ENCODE measurements at regions of chrX and their contacts with region 1.

Region 1: DNA sequence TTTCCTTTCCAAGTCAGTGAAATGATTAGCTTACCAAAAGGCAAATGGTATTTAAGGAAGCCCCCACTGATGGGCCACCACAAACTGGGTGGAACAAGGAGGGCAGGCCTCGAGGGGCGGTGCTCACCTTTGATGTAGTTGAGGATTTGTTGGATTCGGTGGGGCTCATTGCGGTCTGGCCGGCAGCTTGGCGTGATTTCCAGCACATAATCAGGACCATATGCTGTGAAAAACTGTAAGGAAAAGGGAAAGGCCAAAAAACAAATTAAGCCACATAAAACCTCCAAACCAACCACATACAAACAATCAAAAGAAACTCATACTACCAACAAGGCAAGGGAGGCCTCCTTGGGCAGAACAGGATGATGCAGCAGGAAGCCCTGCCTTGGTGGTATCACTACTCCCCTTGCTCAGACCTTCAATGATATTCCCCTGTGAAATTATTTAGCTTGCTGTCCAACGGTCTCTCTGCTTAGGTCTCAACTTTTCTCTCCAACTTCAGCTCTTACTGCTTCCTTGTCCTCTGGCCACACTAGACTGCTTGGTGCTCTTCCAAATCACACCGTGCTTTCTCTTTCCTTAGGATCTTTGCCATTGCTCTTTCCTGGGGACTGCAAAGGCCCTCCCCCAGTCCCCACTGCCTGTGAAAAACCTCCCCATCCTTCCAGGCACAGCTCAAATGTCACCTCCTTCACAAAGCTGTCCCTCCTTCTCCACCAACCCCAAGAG is 46.1 kb upstream of the CITED1 start:
- DNase-seq: no peak

Region 2: GRCh38 chrX:72121383-72121782 is 230.4 kb before region 1 on chrX:
- intact Hi-C with region 1: no loop called
- DNase-seq: peak in 10 of 42 donors; percentile 17 to 66 (median 40)

Region 3: GRCh38 chrX:72297953-72298730 is 53.6 kb before region 1 on chrX:
- intact Hi-C with region 1: loop called (anchors 10 kb)
- DNase-seq: peak in 2 of 42 donors; percentile 6 to 11

Measured in head of caudate nucleus (tissue), 42 donors.